ENCODE measurements at regions of chr7 and their contacts with region 1.

Region 1: GRCh38 chr7:6375348-6376101 is 72.2 kb downstream of the DAGLB start:
- DNase-seq: peak; percentile 46
- H3K4me3 ChIP-seq: peak overlapping the region; percentile 67
- H3K27ac ChIP-seq: peak overlapping the region; percentile 85
- H3K4me1 ChIP-seq: peaks cover 9% of the 10 kb centered on the region
- H3K27me3 ChIP-seq: no peaks in the 10 kb centered on the region
- CTCF ChIP-seq: no peak

Region 2: DNA sequence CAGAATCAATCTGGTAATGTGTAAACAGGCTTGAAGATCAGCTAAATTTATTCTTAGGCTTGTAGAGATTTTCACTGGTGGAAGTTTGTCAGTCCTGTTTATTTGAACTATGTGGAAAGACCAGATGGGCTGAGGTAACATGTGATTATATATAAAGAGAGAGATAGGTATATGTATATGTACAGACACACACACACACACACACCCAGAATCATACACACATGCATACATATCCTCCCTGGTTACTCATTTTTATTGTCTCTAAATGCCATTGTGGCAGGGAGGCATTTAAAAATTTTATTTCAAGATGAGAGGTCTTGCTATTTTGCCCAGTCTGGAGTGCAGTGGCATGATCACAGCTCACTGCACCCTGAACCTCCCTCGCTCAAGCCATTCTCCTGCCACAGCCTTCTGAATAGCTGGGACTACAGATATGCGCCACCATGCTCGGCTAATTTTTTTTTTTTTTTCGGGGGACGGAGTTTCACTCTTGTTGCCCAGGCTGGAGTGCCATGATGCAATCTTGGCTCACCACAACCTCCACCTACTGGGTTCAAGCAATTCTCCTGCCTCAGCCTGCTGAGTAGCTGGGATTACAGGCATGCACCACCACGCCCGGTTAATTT is 25.0 kb before region 1 on chr7:
- CTCF ChIA-PET with region 1: no interaction called
- POLR2A ChIA-PET with region 1: interaction called, 12 read pairs
- intact Hi-C with region 1: no loop called
- DNase-seq: no peak
- H3K4me3 ChIP-seq: no peak overlapping the region
- H3K27ac ChIP-seq: no peak overlapping the region
- H3K4me1 ChIP-seq: no peaks in the 10 kb centered on the region
- H3K27me3 ChIP-seq: no peaks in the 10 kb centered on the region
- CTCF ChIP-seq: no peak

Measured in A673 (cell line).